HEK293T (cell line): ENCODE measurements at regions of chr14 and their contacts with region 1.

Region 1: DNA sequence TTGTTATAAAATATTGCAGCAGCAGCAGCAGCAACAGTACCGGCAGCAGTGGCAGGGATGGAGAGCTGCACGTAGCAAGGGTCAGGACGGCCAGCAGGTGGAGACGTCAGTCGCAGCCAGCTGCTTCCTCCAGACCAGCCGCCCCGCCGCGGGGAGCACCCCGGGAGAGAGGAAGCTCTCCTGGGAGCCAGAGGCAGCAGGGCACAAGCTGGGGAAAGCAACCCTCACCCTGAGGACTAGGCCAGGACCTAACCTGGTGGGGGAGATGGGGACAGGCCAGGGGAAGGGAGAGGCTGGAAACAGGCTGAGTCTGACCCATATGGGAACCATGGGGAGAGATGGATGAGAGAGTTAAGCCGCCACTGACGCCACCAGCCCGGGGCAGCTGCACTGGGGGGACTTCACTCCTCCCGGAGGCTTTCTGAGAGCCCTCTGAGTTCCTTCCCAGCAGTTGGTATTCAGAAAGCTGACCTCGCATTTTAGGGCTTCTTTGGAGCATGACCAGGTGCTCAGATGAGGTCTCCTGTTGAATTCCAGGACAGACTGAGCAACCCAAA is 56.3 kb downstream of the SPTB start:
- DNase-seq: peak; percentile 89

Region 2: GRCh38 chr14:64778104-64778754 is 45.2 kb before region 1 on chr14:
- CTCF ChIA-PET with region 1: no interaction called
- POLR2A ChIA-PET with region 1: no interaction called
- DNase-seq: no peak

Region 3: DNA sequence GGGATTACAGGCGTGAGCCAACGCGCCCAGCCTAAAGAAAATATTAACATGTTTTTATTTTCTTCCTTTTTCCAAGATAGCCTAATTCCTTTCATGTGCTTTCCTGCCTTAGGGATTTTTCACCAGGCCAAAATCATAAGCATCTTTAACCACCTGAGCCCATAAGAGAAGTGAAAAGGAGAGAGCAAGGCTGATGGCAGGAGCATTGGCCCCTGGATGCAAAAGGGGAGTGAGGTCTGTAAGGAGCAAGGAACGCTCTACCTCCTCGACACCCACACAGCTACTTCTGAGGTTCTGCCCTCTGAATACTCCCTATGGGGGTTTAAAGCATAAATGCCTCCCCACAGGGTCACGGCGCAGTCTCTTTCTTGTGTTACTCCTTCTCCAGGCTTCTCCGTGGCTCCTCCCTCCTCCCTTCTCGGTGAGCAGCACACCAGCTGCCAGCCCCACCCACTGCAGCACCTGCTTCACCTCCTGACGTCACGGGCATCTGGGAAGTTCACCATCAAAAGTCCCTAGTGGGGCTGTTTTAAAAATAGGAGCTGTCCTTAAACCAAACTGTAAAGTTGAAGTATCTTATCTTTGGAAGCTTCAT is 11.1 kb before region 1 on chr14:
- CTCF ChIA-PET with region 1: interaction called, 16 read pairs
- POLR2A ChIA-PET with region 1: no interaction called
- DNase-seq: no peak

Region 4: GRCh38 chr14:64880221-64881121 is 57.1 kb after region 1 on chr14:
- CTCF ChIA-PET with region 1: interaction called, 30 read pairs
- POLR2A ChIA-PET with region 1: interaction called, 7 read pairs
- DNase-seq: peak; percentile 77